Activated naive CD4-positive, alpha-beta T cell treated with anti-CD3 and anti-CD28 coated beads for 36 hours (primary cell): ENCODE measurements at regions of chr2 and their contacts with region 1.

Region 1: DNA sequence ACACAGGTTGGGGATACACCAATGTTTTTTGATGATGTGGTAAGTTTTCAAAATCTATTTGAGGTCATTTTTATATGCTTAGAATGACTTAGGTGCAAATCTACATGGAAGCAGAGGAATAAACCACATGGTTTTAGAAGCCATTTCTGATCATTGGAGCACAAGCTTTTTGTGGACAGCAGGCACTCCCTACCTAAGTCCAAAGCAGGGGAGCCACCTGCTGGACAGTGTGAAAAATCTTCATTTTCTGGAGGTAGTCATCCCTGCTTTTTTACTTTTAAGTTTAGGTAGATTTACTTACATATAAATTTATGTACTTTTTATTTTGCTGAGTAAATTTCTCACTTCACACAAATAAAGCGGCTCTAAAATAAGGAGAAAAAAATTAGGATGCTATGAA is 323.2 kb downstream of the PLCL1 start:
- DNase-seq: peak; percentile 68
- H3K4me3 Mint-ChIP-seq: no peak overlapping the region
- H3K27ac Mint-ChIP-seq: no peak overlapping the region
- H3K4me1 Mint-ChIP-seq: no peaks in the 10 kb centered on the region
- H3K27me3 Mint-ChIP-seq: no peaks in the 10 kb centered on the region

Region 2: DNA sequence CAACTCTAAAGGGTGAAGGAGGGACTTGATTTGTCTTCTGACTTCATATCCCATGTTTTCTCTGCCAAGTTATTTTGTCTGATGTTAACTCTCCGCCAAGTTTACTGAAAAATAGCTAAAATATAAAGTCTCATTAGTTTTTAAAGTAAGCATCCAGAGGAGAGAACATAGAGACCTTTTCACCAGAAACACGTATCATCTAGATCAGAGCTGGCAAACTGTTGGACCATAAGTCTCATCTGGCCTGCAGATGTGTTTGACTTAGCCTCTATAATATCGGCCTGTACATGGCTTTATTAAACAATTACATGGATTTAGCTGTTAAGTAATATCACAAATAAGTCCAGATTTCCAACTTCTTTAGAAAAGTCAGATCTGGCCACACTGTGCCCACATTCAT is 140.7 kb before region 1 on chr2:
- CTCF ChIA-PET with region 1: interaction called, 3 read pairs
- intact Hi-C with region 1: loop called (anchors 5 kb)
- DNase-seq: no peak
- H3K4me3 Mint-ChIP-seq: no peak overlapping the region
- H3K27ac Mint-ChIP-seq: no peak overlapping the region
- H3K4me1 Mint-ChIP-seq: peaks cover 35% of the 10 kb centered on the region
- H3K27me3 Mint-ChIP-seq: no peaks in the 10 kb centered on the region

Region 3: GRCh38 chr2:198053776-198054698 is 73.6 kb before region 1 on chr2:
- CTCF ChIA-PET with region 1: interaction called, 3 read pairs
- intact Hi-C with region 1: loop called (anchors 5 kb)
- DNase-seq: peak; percentile 71
- H3K4me3 Mint-ChIP-seq: no peak overlapping the region
- H3K27ac Mint-ChIP-seq: no peak overlapping the region
- H3K4me1 Mint-ChIP-seq: peaks cover 27% of the 10 kb centered on the region
- H3K27me3 Mint-ChIP-seq: no peaks in the 10 kb centered on the region

Region 4: DNA sequence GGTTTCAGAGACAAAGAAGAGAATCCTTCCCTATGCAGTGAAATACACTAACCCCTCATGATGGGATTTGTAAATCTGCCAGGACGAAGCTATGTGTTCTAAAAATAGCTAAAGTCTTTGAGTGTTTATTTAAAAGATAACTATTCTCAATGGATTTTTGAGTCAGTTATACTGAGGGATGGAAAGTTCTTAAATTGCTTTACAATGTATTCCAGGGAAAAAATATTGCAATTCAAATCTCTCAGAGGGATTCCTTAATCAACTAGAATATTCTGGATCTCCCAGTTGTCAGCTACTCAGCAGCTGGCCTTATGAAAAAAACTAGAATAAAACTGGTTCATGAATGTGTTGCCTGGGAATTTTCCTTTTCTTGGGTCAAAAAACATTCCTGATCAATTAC is 10.9 kb before region 1 on chr2:
- CTCF ChIA-PET with region 1: interaction called, 10 read pairs
- intact Hi-C with region 1: no loop called
- DNase-seq: no peak
- H3K4me3 Mint-ChIP-seq: no peak overlapping the region
- H3K27ac Mint-ChIP-seq: no peak overlapping the region
- H3K4me1 Mint-ChIP-seq: peaks cover 8% of the 10 kb centered on the region
- H3K27me3 Mint-ChIP-seq: no peaks in the 10 kb centered on the region

Region 5: GRCh38 chr2:198296665-198297308 is 169.2 kb after region 1 on chr2:
- CTCF ChIA-PET with region 1: interaction called, 24 read pairs
- intact Hi-C with region 1: loop called (anchors 1 kb)
- DNase-seq: peak; percentile 73
- H3K4me3 Mint-ChIP-seq: no peak overlapping the region
- H3K27ac Mint-ChIP-seq: no peak overlapping the region
- H3K4me1 Mint-ChIP-seq: no peaks in the 10 kb centered on the region
- H3K27me3 Mint-ChIP-seq: peaks cover 7% of the 10 kb centered on the region